Activated T-helper 2 cell treated with anti-CD3 and anti-CD28 coated beads, Interferon-gamma antibody, Interleukin-2, Interleukin-4, amounts not matched to agents 10 μg/mL and 5 μg/mL and 100 μg/mL, durations not matched to agents 14 hours and 24 hours and 36 hours (primary cell): ENCODE measurements at regions of chr11 and their contacts with region 1.

Region 1: DNA sequence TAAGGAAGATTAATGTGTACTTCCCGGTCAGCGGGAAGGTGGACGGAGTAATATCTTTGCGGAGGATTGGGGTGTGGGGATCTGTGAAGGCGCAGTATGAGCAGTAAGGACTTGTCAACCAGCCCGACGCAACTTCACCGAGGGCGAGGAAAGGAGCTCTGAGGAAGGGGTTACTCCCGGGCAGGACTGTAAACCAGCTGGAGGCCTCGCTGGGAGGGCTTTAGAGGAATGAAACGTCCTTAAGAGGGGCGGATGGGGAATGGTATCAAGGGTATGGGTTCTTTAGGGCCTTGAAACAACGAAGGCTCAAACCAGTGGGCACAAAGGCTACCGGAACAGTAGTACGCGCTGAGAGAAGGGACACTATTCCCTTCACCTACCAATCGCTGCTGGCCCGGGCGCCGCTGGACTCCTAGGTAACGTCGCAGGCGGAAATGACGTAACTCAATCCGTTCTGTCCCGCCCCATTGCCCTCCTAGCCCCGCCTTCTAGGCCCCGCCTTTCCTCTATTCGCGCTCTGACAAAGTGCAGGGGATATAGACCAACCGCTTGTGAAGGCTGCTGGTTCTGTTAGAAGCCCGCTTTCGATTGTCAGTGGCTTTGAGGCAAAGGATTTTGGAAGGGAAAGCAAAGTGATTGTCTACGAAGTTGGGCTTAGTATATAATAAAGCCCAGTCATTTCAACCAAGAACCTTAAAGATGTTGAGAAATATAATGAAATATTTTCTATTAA is at the start of gene C11orf65:
- DNase-seq: peak; percentile 94
- H3K4me3 Mint-ChIP-seq: peak within 1 kb of the TSS; percentile 96
- H3K27ac Mint-ChIP-seq: peak within 1 kb of the TSS; percentile 100
- H3K4me1 Mint-ChIP-seq: peaks cover 16% of the 10 kb centered on the region
- H3K27me3 Mint-ChIP-seq: no peaks in the 10 kb centered on the region
- total RNA-seq, gene C11orf65: 0.43 and 0.97 TPM in 2 replicates

Region 2: DNA sequence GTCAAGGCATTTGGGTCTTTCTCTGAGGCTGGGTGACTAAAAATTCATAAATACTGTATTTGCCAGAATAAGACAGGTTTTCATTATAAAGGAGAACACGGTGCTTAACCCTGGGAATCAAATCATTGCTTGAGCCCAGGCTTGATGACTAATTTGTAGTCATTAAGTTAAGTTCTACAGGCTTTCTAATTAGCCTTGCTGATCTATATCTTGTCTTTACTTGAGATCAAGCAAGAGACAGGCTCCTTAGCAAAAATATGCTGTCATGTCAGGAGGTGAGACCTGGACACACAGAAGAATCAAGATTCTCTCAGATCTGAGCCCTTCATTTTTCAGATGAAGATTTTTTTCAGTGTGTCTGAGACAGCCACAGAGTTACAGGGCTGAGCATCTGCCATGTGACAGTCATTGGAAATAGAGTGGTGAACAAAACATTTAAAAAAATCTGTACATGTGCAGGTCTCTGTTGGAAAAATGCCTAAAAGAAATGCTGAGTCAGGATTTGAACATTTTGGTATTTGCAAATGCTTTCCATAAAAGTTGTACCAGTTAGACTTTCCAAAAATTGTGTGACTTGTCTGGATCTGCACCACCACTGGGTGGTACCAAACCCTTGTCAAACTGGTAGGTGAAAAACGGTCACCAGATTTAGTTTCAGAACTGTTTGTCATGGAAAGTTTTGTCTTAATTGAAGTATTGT is 331.3 kb before region 1 on chr11:
- intact Hi-C with region 1: loop called (anchors 5 kb)
- DNase-seq: no peak
- H3K4me3 Mint-ChIP-seq: no peak overlapping the region
- H3K27ac Mint-ChIP-seq: peak overlapping the region; percentile 79
- H3K4me1 Mint-ChIP-seq: peaks cover 20% of the 10 kb centered on the region
- H3K27me3 Mint-ChIP-seq: no peaks in the 10 kb centered on the region

Region 3: DNA sequence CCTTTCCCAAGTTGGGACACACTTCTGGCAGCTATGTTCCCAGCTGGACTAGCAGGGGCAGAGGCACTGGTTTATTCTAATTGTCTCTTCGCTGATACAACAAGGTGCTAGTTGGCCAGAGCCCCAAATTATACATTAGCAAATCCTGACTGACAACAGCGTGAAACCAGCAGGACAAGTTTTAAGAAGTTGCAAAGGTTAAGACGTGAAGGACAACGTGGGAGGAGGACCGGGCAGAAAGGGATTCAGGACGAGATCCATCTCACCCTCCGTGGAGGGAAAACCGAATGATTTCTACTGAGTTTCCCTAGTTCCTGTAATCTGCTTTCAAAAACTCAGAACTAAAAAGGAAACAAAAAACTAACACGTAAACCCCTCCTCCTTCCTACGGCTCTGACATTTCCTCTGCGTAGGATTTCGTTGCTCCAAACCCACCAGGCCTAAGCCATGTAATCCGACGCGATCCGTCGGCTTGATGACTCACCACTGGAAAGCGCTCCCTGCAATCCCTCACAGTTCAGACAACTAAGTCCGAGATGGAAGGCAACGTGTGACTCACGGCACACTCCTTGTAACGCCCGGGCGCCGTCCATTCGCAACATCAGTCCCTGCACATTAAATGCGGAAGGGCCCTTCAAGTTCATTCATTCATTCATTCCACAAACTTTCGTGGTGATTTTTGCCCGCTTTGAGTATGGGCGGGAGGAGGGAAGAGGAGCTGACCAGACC is 30.2 kb after region 1 on chr11:
- intact Hi-C with region 1: loop called (anchors 1 kb)
- DNase-seq: peak; percentile 68
- H3K4me3 Mint-ChIP-seq: peak overlapping the region; percentile 93
- H3K27ac Mint-ChIP-seq: peak overlapping the region; percentile 98
- H3K4me1 Mint-ChIP-seq: peaks cover 23% of the 10 kb centered on the region
- H3K27me3 Mint-ChIP-seq: peaks cover 4% of the 10 kb centered on the region

Region 4: DNA sequence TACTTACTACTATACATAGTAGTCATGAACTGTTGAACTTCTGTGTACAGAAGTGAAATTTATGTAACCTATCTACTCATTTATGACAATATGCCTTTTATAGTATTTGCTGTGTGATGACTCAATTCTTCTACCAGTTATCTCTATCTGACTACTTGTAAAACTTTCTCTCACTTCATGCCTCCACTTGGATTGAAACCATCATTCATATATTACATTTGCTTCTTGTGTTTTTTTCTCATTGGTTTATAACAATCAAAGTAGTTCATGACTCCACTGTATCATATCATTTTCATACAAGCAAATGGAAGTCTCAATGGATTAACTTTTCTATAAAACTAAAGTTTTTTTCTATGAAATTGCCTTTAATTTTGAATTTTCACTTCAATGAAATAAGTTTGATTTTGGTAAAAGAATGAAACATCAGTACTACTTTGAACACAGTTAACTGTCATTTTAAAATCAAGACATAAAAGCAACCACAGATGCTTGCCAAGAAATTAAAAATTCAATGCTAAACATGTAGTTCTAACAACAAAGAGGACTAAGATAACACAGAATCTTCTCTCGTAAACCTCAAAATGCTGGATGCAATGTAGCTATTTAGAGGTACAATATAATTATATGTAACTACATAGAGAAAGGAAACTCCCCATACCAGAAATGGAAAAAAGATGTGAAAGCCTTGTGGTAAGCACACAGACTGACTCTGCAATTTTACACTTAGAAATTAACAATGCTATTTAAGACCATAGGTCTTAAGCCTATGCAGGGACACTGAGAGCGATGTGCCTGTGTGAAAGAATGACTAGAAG is 153.9 kb after region 1 on chr11:
- intact Hi-C with region 1: loop called (anchors 1 kb)
- DNase-seq: no peak
- H3K4me3 Mint-ChIP-seq: no peak overlapping the region
- H3K27ac Mint-ChIP-seq: no peak overlapping the region
- H3K4me1 Mint-ChIP-seq: peaks cover 32% of the 10 kb centered on the region
- H3K27me3 Mint-ChIP-seq: peaks cover 35% of the 10 kb centered on the region